Activated T-helper 1 cell treated with anti-CD3 and anti-CD28 coated beads, Interleukin-12 subunit alpha, Interleukin-12 subunit beta, Interleukin-2, Interleukin-4 antibody, amounts not matched to agents 30 ng/mL and 10 ng/mL and 1 ng/mL, durations not matched to agents 14 hours and 24 hours and 36 hours (primary cell): ENCODE measurements at regions of chr14 and their contacts with region 1.

Region 1: DNA sequence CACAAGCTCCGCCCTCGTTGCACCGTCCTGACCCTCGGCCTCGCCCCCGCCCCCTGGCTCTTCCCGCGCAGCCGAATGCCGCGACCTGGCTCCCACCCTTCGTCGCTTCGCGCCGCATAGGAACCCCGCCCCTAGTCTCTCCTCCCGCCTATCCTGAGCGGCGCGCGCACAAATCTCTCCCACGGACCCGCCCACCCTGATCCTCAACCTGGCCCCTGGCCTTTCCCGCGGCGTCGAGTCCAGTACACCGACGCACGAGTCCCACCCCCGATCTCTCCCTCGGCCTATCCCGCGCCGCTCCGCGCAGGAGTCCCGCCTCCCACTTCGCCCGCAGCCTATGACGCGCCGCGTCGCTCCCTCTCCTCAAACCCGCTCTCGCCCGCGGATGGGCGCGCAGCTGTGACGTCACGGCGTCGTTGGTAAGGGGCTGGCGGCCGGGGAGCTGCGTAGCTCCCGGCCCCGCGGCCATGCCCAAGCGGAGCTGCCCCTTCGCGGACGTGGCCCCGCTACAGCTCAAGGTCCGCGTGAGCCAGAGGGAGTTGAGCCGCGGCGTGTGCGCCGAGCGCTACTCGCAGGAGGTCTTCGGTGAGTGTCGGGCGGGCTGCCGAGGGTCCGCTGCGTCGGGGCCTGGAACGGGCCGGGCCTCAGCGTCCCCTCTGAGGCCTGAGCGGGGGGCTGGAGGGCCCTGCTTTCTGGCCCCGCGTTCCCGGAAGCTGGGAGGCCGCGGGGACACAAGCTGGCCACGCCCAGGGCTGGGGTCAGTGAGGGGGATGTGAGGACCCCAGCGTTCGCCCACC is at the start of gene SIVA1:
- DNase-seq: peak; percentile 100
- H3K4me3 Mint-ChIP-seq: peak within 1 kb of the TSS; percentile 92
- H3K27ac Mint-ChIP-seq: peak within 1 kb of the TSS; percentile 90
- H3K4me1 Mint-ChIP-seq: peaks cover 21% of the 10 kb centered on the region
- H3K27me3 Mint-ChIP-seq: peaks cover 2% of the 10 kb centered on the region
- total RNA-seq, gene SIVA1: 111 and 113 TPM in 2 replicates

Region 2: GRCh38 chr14:104694991-104695659 is 57.8 kb before region 1 on chr14:
- intact Hi-C with region 1: loop called (anchors 2 kb)
- DNase-seq: peak; percentile 39
- H3K4me3 Mint-ChIP-seq: peak overlapping the region; percentile 62
- H3K27ac Mint-ChIP-seq: peak overlapping the region; percentile 87
- H3K4me1 Mint-ChIP-seq: peaks cover 36% of the 10 kb centered on the region
- H3K27me3 Mint-ChIP-seq: no peaks in the 10 kb centered on the region

Region 3: GRCh38 chr14:104768437-104769323 is 15.7 kb after region 1 on chr14:
- intact Hi-C with region 1: loop called (anchors 1 kb)
- DNase-seq: peak; percentile 86
- H3K4me3 Mint-ChIP-seq: no peak overlapping the region
- H3K27ac Mint-ChIP-seq: no peak overlapping the region
- H3K4me1 Mint-ChIP-seq: no peaks in the 10 kb centered on the region
- H3K27me3 Mint-ChIP-seq: no peaks in the 10 kb centered on the region

Region 4: GRCh38 chr14:104826189-104826860 is 73.4 kb after region 1 on chr14:
- intact Hi-C with region 1: loop called (anchors 1 kb)
- DNase-seq: peak; percentile 92
- H3K4me3 Mint-ChIP-seq: peak overlapping the region; percentile 57
- H3K27ac Mint-ChIP-seq: no peak overlapping the region
- H3K4me1 Mint-ChIP-seq: peaks cover 15% of the 10 kb centered on the region
- H3K27me3 Mint-ChIP-seq: peaks cover 35% of the 10 kb centered on the region

Region 5: GRCh38 chr14:105020815-105021655 is 268.1 kb after region 1 on chr14 and contains the start of gene CDCA4:
- intact Hi-C with region 1: loop called (anchors 1 kb)
- DNase-seq: peak; percentile 97
- H3K4me3 Mint-ChIP-seq: peak within 1 kb of the TSS; percentile 99
- H3K27ac Mint-ChIP-seq: peak within 1 kb of the TSS; percentile 86
- H3K4me1 Mint-ChIP-seq: peaks cover 72% of the 10 kb centered on the region
- H3K27me3 Mint-ChIP-seq: no peaks in the 10 kb centered on the region
- total RNA-seq, gene CDCA4: 62.5 and 63.7 TPM in 2 replicates

Region 6: GRCh38 chr14:105646175-105646574 is 893.2 kb after region 1 on chr14:
- intact Hi-C with region 1: no loop called
- DNase-seq: no peak
- H3K4me3 Mint-ChIP-seq: no peak overlapping the region
- H3K27ac Mint-ChIP-seq: no peak overlapping the region
- H3K4me1 Mint-ChIP-seq: no peaks in the 10 kb centered on the region
- H3K27me3 Mint-ChIP-seq: no peaks in the 10 kb centered on the region